GM12878 (cell line): ENCODE measurements at regions of chr1 and their contacts with region 1.

Region 1: GRCh38 chr1:109112652-109113285 is 1.1 kb upstream of the ELAPOR1 start:
- DNase-seq: peak; percentile 31
- ATAC-seq: peak; percentile 89
- H3K4me3 ChIP-seq: peak overlapping the region; percentile 45; the same call in 1 of the 2 replicates
- H3K27ac ChIP-seq: no peak overlapping the region
- H3K4me1 ChIP-seq: peaks cover 15% of the 10 kb centered on the region
- H3K27me3 ChIP-seq: peaks cover 8 to 11% of the 10 kb centered on the region in 2 experiments
- CTCF ChIP-seq: peak; percentile 92 to 95 (median 93)
- EP300 ChIP-seq: no peak
- POLR2A ChIP-seq: no peak
- RAD21 ChIP-seq: peak; percentile 74

Region 2: GRCh38 chr1:108828022-108828961 is 284.5 kb before region 1 on chr1:
- CTCF ChIA-PET with region 1: interaction called, 33 read pairs
- POLR2A ChIA-PET with region 1: no interaction called
- RAD21 ChIA-PET with region 1: interaction called, 11 read pairs
- SMC1A ChIA-PET with region 1: interaction called, 33 read pairs
- in situ Hi-C with region 1: no loop called
- intact Hi-C with region 1: loop called (anchors 1 kb)
- DNase-seq: peak; percentile 15
- ATAC-seq: peak; percentile 96
- H3K4me3 ChIP-seq: no peak overlapping the region
- H3K27ac ChIP-seq: no peak overlapping the region
- H3K4me1 ChIP-seq: no peaks in the 10 kb centered on the region
- H3K27me3 ChIP-seq: no peaks in the 10 kb centered on the region
- CTCF ChIP-seq: peak; percentile 67 to 78 (median 71)
- EP300 ChIP-seq: no peak
- POLR2A ChIP-seq: no peak
- RAD21 ChIP-seq: peak; percentile 67

Region 3: DNA sequence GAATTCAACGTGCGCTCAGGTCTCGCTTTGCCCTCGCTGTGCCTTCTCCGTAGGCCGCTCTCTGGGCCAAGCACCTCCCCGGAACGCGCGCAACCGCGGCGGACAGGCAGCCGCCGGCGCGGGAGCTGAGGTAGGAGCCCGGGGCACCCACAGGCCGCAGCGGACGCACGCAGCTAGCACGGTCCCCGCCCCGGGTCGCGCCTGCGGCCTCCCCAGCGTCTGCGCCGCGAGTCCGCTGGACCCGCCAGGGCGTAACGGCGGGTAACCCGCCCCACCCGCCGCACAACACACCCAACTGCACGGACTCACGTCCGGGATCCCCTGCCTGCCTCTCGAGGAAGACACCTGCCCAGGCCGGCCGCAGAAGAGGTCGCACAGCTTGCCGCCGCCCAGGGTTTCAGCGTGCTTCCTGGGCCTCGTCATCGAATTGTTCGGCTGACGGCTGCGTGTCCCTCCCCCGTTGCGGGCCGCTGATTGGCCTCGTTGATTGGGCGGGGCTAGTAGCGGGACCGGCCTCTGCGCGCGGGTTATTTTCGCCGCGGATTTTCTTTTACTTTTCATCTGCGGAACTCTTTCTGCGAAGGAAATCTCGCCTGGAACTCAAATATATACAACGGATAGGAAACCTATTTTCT is 149.6 kb before region 1 on chr1 and contains the start of gene CLCC1:
- CTCF ChIA-PET with region 1: interaction called, 4 read pairs
- POLR2A ChIA-PET with region 1: no interaction called
- RAD21 ChIA-PET with region 1: interaction called, 5 read pairs
- SMC1A ChIA-PET with region 1: interaction called, 6 read pairs
- in situ Hi-C with region 1: no loop called
- intact Hi-C with region 1: loop called (anchors 5 kb)
- DNase-seq: peak; percentile 77
- ATAC-seq: peak; percentile 94
- H3K4me3 ChIP-seq: peak within 1 kb of the TSS; percentile 78
- H3K27ac ChIP-seq: peak within 1 kb of the TSS; percentile 90
- H3K4me1 ChIP-seq: peaks cover 12% of the 10 kb centered on the region
- H3K27me3 ChIP-seq: no peaks in the 10 kb centered on the region
- CTCF ChIP-seq: no peak
- EP300 ChIP-seq: peak; percentile 17 to 36; a peak in 2 of 4 replicates
- POLR2A ChIP-seq: peak; percentile 94
- RAD21 ChIP-seq: no peak
- polyA plus RNA-seq, gene CLCC1: 12.7 to 13.3 TPM

Region 4: DNA sequence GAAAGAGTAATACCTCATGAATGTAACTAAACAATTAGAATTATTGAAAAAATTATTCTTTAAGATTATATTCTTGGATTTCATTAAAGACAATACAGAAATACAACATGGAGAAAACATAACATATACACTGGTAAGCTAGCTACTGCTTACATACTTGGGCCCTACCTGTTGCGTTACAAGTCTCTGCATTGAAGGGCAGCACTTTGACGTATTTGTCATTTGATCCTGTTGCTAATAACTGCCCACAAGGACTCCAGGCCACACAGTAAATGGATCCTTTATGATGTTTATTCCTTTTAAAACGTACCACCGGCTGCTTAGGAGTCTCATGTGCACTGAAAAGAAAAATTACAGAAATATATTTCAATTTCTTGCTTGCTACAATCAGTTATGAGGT is 129.7 kb before region 1 on chr1:
- CTCF ChIA-PET with region 1: no interaction called
- POLR2A ChIA-PET with region 1: no interaction called
- RAD21 ChIA-PET with region 1: no interaction called
- SMC1A ChIA-PET with region 1: no interaction called
- in situ Hi-C with region 1: no loop called
- intact Hi-C with region 1: no loop called
- DNase-seq: no peak
- ATAC-seq: no peak
- H3K4me3 ChIP-seq: no peak overlapping the region
- H3K27ac ChIP-seq: no peak overlapping the region
- H3K4me1 ChIP-seq: no peaks in the 10 kb centered on the region
- H3K27me3 ChIP-seq: no peaks in the 10 kb centered on the region
- CTCF ChIP-seq: no peak
- EP300 ChIP-seq: no peak
- POLR2A ChIP-seq: no peak
- RAD21 ChIP-seq: no peak

Region 5: DNA sequence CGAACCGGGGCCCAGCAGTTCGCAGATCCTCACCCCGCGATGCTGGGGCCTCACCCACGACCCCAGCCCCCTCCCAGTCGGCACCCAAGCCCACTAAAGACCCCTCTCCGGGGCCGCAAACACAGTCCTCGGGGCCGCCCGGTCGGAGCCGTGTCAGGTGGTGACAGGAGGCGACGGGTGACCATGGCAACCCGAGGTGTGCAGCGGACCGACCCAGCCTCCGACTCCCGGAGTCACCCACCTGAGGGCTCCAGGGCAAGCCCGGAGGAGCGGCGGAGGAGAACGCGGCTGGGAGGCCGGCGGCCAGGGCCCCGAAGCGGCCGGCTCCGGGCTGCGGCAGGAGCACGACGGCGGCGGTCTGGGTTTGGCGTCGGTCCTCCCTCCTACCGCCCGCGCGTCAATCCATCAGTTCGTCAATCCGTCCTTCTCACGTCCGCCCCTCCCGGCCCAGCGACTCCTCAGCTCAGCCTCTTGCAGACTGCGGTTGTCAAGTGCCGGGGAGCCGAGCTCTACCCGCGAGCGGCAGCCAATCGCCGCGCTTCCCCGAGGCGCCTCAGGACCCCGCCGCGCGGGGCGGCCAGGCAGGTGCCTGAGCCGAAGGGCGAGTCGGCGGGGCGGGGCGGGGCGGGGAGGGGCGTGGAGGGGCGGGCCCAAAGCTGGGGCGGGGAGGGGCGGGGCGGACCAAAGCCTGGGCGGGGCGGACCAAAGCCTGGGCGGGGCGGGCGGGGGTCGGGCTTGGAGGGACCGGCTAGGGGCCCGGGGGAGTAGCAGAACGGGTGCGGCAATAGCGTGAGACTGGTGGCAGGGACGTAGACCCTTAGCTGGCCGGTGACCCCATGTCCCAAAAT is 70.9 kb before region 1 on chr1 and contains the start of gene WDR47:
- CTCF ChIA-PET with region 1: interaction called, 3 read pairs
- POLR2A ChIA-PET with region 1: interaction called, 3 read pairs
- RAD21 ChIA-PET with region 1: interaction called, 4 read pairs
- SMC1A ChIA-PET with region 1: interaction called, 3 read pairs
- in situ Hi-C with region 1: no loop called
- intact Hi-C with region 1: loop called (anchors 5 kb)
- DNase-seq: peak; percentile 72
- ATAC-seq: peak; percentile 98
- H3K4me3 ChIP-seq: peak within 1 kb of the TSS; percentile 100
- H3K27ac ChIP-seq: peak within 1 kb of the TSS; percentile 29
- H3K4me1 ChIP-seq: no peaks in the 10 kb centered on the region
- H3K27me3 ChIP-seq: no peaks in the 10 kb centered on the region
- CTCF ChIP-seq: no peak
- EP300 ChIP-seq: no peak
- POLR2A ChIP-seq: peak; percentile 100
- RAD21 ChIP-seq: no peak
- polyA plus RNA-seq, gene WDR47: 2.4 TPM

Region 6: GRCh38 chr1:109099938-109100773 is 12.6 kb before region 1 on chr1:
- CTCF ChIA-PET with region 1: interaction called, 57 read pairs
- POLR2A ChIA-PET with region 1: interaction called, 25 read pairs
- RAD21 ChIA-PET with region 1: interaction called, 7 read pairs
- SMC1A ChIA-PET with region 1: interaction called, 8 read pairs
- in situ Hi-C with region 1: no loop called
- intact Hi-C with region 1: loop called (anchors 1 kb)
- DNase-seq: peak; percentile 84
- ATAC-seq: peak; percentile 94
- H3K4me3 ChIP-seq: peak overlapping the region; percentile 96
- H3K27ac ChIP-seq: peak overlapping the region; percentile 92
- H3K4me1 ChIP-seq: 0 out of 2 replicates have a peak, but pooled peaks cover 3% of the 10 kb centered on the region
- H3K27me3 ChIP-seq: no peaks in the 10 kb centered on the region
- CTCF ChIP-seq: peak; percentile 88 to 90 (median 89)
- EP300 ChIP-seq: peak in 1 of 2 experiments; percentile 6; a peak in 1 of 4 replicates
- POLR2A ChIP-seq: peak; percentile 100
- RAD21 ChIP-seq: peak; percentile 32; the same call in 1 of the 2 replicates

Region 7: DNA sequence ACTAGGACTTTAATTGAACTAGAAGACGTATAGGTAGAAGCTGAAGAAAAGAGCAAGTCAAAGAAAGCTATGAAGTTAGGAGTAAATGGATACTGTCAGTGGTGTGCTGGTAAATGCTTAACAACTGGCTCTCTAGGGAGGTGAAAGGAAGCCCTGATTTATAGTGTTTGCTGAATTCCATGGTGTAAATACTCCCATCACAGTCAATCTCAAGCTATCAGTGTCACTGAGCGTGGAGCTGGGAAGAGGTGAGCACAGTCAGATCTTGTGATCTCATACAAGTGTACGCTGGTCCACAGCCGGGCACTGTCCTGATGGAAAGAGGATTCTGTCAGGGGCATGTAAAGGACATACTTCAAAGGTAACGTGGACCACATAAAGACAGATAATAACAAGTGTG is 29.5 kb after region 1 on chr1:
- CTCF ChIA-PET with region 1: no interaction called
- POLR2A ChIA-PET with region 1: no interaction called
- RAD21 ChIA-PET with region 1: no interaction called
- SMC1A ChIA-PET with region 1: no interaction called
- in situ Hi-C with region 1: no loop called
- intact Hi-C with region 1: no loop called
- DNase-seq: no peak
- ATAC-seq: no peak
- H3K4me3 ChIP-seq: no peak overlapping the region
- H3K27ac ChIP-seq: no peak overlapping the region
- H3K4me1 ChIP-seq: no peaks in the 10 kb centered on the region
- H3K27me3 ChIP-seq: no peaks in the 10 kb centered on the region
- CTCF ChIP-seq: no peak
- EP300 ChIP-seq: no peak
- POLR2A ChIP-seq: no peak
- RAD21 ChIP-seq: no peak

Region 8: GRCh38 chr1:109161858-109162606 is 49.3 kb after region 1 on chr1:
- CTCF ChIA-PET with region 1: interaction called, 6 read pairs
- POLR2A ChIA-PET with region 1: no interaction called
- RAD21 ChIA-PET with region 1: no interaction called
- SMC1A ChIA-PET with region 1: interaction called, 5 read pairs
- in situ Hi-C with region 1: no loop called
- intact Hi-C with region 1: loop called (anchors 2 kb)
- DNase-seq: peak; percentile 58
- ATAC-seq: peak; percentile 70
- H3K4me3 ChIP-seq: 0 out of 2 replicates have a peak overlapping the region, but pooled peaks have one; percentile 5
- H3K27ac ChIP-seq: no peak overlapping the region
- H3K4me1 ChIP-seq: peaks cover 31% of the 10 kb centered on the region
- H3K27me3 ChIP-seq: no peaks in the 10 kb centered on the region
- CTCF ChIP-seq: no peak
- EP300 ChIP-seq: no peak
- POLR2A ChIP-seq: no peak
- RAD21 ChIP-seq: no peak

Region 9: GRCh38 chr1:109357616-109358015 is 244.8 kb after region 1 on chr1:
- CTCF ChIA-PET with region 1: no interaction called
- POLR2A ChIA-PET with region 1: no interaction called
- RAD21 ChIA-PET with region 1: no interaction called
- SMC1A ChIA-PET with region 1: no interaction called
- in situ Hi-C with region 1: no loop called
- intact Hi-C with region 1: no loop called
- DNase-seq: no peak
- ATAC-seq: no peak
- H3K4me3 ChIP-seq: no peak overlapping the region
- H3K27ac ChIP-seq: no peak overlapping the region
- H3K4me1 ChIP-seq: no peaks in the 10 kb centered on the region
- H3K27me3 ChIP-seq: no peaks in the 10 kb centered on the region
- CTCF ChIP-seq: no peak
- EP300 ChIP-seq: no peak
- POLR2A ChIP-seq: no peak
- RAD21 ChIP-seq: no peak

Region 10: DNA sequence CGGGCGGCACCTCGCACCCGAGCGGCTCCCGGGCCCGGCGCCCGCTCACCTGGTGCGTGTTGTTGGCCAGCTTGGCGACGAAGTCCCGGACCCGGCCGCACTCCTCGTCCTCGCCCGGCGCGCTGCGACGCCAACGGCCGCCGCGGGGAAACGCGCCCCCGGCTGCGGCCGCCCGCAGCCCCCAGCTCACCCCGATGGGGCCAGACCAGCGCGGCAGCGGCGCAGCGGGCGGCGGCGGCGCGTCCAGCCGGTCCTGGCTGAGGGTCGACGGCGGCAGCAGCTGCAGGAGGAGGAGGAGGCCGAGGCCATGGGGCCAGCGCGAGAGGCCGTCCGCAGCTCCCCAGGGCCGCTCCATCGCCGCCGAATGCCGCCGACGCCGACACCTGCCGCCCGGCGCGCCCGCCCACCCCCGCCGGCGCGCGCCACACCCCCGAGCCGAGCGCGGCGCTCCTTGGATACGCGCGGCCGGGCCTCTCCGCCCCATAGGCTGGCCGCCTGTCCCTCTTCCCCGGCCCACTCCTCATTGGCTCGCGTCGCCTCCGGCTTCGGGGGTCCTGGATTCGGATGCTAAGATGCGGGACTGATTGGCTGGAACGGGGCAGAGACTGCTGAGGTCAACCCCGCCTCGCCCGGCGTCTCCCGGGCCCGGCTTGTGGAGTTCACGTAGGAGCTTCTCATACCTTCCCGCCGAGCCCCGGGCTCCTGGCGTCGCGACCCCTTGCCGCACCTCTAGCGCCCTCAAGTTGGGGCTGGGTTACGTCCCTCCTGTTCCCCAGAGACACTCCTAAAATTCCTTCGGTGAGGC is 285.0 kb after region 1 on chr1 and contains the start of gene SORT1:
- CTCF ChIA-PET with region 1: no interaction called
- POLR2A ChIA-PET with region 1: no interaction called
- RAD21 ChIA-PET with region 1: no interaction called
- SMC1A ChIA-PET with region 1: no interaction called
- in situ Hi-C with region 1: no loop called
- intact Hi-C with region 1: loop called (anchors 10 kb)
- DNase-seq: no peak
- ATAC-seq: peak; percentile 96
- H3K4me3 ChIP-seq: peak within 1 kb of the TSS; percentile 55
- H3K27ac ChIP-seq: no peak within 1 kb of the TSS
- H3K4me1 ChIP-seq: peaks cover 3% of the 10 kb centered on the region
- H3K27me3 ChIP-seq: peaks cover 1 to 4% of the 10 kb centered on the region in 2 experiments; a peak in 3 of 4 replicates
- CTCF ChIP-seq: no peak
- EP300 ChIP-seq: no peak
- POLR2A ChIP-seq: peak; percentile 39; the same call in 1 of the 2 replicates
- RAD21 ChIP-seq: no peak
- polyA plus RNA-seq, gene SORT1: 0.06 to 0.16 TPM